ENCODE measurements at regions of chr7 and their contacts with region 1.

Region 1: GRCh38 chr7:93902777-93903423 is 3.5 kb upstream of the GNGT1 start:
- DNase-seq: no peak
- ATAC-seq: peak; percentile 36
- H3K4me3 ChIP-seq: no peak overlapping the region
- H3K4me3 Mint-ChIP-seq: no peak overlapping the region
- H3K27ac ChIP-seq: no peak overlapping the region
- H3K27ac Mint-ChIP-seq: no peak overlapping the region
- H3K4me1 ChIP-seq: no peaks in the 10 kb centered on the region
- H3K4me1 Mint-ChIP-seq: no peaks in the 10 kb centered on the region
- H3K27me3 ChIP-seq: no peaks in the 10 kb centered on the region
- H3K27me3 Mint-ChIP-seq: peaks cover 7 to 35% (median 13%) of the 10 kb centered on the region in 5 donors

Region 2: DNA sequence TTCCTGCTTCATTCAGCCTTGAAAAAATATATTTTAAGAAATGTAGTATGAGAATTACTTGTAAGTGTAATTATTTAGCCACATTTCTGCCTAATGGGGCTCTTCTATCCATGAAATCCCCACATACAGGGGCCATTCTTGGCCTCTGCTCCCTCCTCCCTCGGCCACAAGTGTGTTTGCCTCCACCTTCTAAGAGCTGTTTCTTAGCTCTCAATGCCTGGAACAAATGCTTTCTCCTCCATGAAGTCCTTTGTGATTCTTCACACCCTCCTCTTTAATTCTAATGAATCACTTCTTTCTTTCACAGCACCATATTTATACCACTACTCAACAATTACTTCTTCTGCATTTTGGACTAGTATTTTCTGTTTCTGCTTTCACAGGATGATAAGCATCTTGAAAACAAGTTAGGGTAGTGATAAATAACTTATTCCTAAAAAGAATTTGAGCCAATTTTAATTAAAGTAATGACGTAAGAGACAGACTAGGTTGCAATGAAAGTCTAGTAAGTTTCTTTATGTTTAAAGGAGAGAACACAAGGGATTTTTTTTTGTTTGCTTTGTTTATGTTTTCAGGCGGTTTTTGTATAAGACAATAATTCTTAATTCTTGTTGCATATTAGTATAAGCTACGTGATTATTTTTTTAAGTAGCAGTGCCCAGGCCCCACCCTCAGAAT is 190.2 kb after region 1 on chr7:
- CTCF ChIA-PET with region 1: no interaction called
- POLR2A ChIA-PET with region 1: no interaction called
- intact Hi-C with region 1: no loop called
- DNase-seq: no peak
- ATAC-seq: no peak
- H3K4me3 ChIP-seq: no peak overlapping the region
- H3K4me3 Mint-ChIP-seq: no peak overlapping the region
- H3K27ac ChIP-seq: no peak overlapping the region
- H3K27ac Mint-ChIP-seq: no peak overlapping the region
- H3K4me1 ChIP-seq: no peaks in the 10 kb centered on the region
- H3K4me1 Mint-ChIP-seq: no peaks in the 10 kb centered on the region
- H3K27me3 ChIP-seq: no peaks in the 10 kb centered on the region
- H3K27me3 Mint-ChIP-seq: peaks cover 30 to 52% (median 43%) of the 10 kb centered on the region in 5 donors

Region 3: GRCh38 chr7:94274828-94275227 is 371.9 kb after region 1 on chr7:
- CTCF ChIA-PET with region 1: no interaction called
- POLR2A ChIA-PET with region 1: no interaction called
- intact Hi-C with region 1: loop called in 1 of 2 experiments (anchors 5 kb)
- DNase-seq: peak in 1 of 9 donors; percentile 23
- ATAC-seq: no peak
- H3K4me3 ChIP-seq: no peak overlapping the region
- H3K4me3 Mint-ChIP-seq: no peak overlapping the region
- H3K27ac ChIP-seq: no peak overlapping the region
- H3K27ac Mint-ChIP-seq: no peak overlapping the region
- H3K4me1 ChIP-seq: no peaks in the 10 kb centered on the region
- H3K4me1 Mint-ChIP-seq: no peaks in the 10 kb centered on the region
- H3K27me3 ChIP-seq: no peaks in the 10 kb centered on the region
- H3K27me3 Mint-ChIP-seq: peaks cover 0 to 18% (median 5%) of the 10 kb centered on the region in 5 donors

Region 4: DNA sequence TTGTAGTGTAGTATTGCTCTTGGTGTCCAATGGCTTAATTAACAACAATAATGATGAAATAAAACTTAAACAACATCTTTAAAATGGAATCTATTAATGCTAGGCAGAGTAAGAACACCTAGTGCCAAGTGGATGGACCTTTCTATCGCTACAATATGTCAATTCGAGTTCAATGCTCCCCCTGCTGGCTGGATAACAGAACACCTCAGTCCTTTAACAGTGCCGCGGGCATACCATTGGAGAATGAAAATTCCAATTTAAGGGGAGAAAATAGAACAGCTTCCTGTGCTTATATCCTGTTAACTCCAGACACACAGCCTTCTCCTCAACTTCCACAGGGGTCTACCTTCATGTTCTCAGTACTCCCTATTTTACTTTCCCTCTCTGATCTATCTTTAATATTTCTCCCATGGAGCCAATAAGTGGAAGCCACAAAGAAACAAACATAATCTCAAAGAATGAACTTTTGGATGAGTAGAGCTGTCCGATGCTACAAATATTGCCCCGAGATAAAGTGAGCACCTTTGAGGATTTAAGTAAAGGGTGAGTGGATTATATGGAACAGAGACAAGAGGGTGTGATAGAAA is 533.2 kb after region 1 on chr7:
- CTCF ChIA-PET with region 1: no interaction called
- POLR2A ChIA-PET with region 1: no interaction called
- intact Hi-C with region 1: loop called in 1 of 2 experiments (anchors 2 kb)
- DNase-seq: peak in 7 of 9 donors; percentile 7 to 50 (median 36)
- ATAC-seq: peak; percentile 74
- H3K4me3 ChIP-seq: no peak overlapping the region
- H3K4me3 Mint-ChIP-seq: no peak overlapping the region
- H3K27ac ChIP-seq: no peak overlapping the region
- H3K27ac Mint-ChIP-seq: no peak overlapping the region
- H3K4me1 ChIP-seq: no peaks in the 10 kb centered on the region
- H3K4me1 Mint-ChIP-seq: peaks cover 0 to 3% (median 0%) of the 10 kb centered on the region in 7 donors
- H3K27me3 ChIP-seq: no peaks in the 10 kb centered on the region
- H3K27me3 Mint-ChIP-seq: peaks cover 22 to 30% (median 23%) of the 10 kb centered on the region in 5 donors

Measured in naive thymus-derived CD4-positive, alpha-beta T cell (primary cell).